ENCODE measurements at regions of chr1 and their contacts with region 1.

Region 1: DNA sequence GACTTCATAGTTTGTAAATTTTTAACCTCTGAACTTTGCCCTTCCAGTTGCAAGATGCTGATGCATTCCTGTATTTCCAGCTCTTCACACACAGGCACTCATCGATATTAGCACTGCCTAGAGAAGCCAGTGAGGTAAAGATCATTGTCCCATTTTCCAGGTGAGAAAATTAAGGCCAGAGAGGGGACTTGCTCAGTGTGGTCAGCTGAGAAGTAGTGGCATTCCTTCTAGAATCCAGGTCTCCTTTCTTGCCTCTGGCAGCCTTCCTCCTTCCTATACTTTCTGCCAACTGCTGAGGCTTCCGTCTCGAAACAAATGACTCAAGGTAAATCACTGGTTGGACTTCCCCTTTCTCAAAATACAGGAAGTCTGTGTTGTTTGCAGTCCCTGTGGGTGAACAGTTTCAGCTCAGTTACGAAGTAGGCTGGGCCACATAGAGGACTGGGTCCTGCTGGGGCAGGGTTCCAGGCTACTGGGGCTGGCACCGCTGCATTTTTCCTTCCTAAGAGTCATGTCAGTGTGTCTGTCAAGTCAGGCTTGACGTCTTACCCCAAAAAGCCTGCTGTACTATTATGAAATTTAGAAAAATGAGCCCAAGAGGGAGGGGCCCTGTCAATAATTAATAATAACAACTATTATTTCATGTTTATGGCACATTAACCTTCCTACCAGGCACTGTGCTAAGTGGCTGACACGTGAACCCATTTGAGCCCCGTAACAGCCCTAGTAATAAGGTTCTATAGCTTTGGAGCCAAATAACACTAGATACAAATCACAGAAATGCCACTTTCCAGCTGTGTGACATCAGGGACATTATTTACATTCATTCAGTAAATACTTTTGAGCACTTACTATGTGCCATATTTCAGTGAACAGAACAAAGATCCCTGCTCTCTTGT is 16.6 kb upstream of the RNF19B start:
- DNase-seq: no peak
- H3K4me3 ChIP-seq: no peak overlapping the region
- H3K27ac ChIP-seq: no peak overlapping the region
- H3K4me1 ChIP-seq: no peaks in the 10 kb centered on the region
- H3K27me3 ChIP-seq: no peaks in the 10 kb centered on the region
- CTCF ChIP-seq: no peak
- EP300 ChIP-seq: no peak
- POLR2A ChIP-seq: no peak

Region 2: DNA sequence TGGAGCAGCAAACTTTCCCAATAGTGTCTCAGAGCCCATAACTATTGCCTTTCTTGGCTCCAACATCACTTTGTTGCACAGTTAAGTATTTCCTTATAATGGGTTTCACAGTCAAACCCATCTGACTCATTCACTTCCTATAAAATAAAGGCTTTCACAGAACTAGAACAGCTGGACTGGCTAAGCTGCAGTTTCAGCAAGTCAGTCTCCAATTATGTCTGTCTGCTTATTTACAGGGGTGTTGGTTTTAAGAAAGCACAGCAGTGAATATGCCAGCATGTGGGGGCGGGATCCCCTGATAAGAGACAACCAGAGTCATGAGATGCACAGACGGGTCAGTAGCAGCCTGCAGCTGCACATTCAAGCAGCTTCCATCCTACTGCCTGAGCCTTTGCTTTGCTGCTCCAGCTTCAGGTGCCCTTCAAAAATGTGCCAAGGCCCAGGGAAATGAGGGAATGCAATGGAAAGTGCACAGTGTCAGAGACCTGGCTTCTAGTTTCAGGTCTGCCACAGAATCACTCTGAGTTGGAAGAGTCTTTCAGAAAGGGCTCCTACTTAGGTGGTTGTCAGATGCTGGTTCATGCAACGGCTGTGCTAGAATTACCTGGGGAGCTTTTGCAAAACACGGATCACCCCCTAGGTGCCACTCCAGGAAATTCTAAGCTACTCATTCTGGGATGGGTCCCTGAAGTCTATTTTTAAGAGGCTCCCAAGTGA is 41.4 kb before region 1 on chr1:
- intact Hi-C with region 1: no loop called
- DNase-seq: peak in 4 of 5 donors; percentile 30 to 64 (median 52)
- H3K4me3 ChIP-seq: no peak overlapping the region
- H3K27ac ChIP-seq: no peak overlapping the region
- H3K4me1 ChIP-seq: peaks cover 4% of the 10 kb centered on the region
- H3K27me3 ChIP-seq: no peaks in the 10 kb centered on the region
- CTCF ChIP-seq: no peak
- EP300 ChIP-seq: no peak
- POLR2A ChIP-seq: no peak

Region 3: DNA sequence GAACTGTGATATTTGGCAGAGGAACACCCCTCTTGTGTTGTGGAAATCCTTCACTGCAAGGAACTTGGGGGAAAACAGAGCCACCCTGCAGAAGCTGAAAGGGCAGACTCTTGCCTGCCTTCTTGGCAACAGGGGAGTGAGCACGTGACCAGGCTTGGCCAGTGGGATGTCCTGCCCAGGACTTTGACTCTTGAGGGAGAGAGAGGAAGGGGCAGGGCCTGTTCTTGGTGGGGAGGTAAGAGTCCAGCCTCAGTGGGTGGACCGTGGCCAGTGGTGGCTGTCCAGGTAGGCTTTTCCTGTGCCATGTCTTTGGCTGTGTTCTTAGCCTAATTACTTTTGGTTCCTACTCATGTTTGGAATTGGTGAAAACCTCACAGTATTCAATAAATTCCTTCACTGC is 64.0 kb after region 1 on chr1:
- intact Hi-C with region 1: loop called in 1 of 4 experiments (anchors 10 kb)
- DNase-seq: no peak
- H3K4me3 ChIP-seq: no peak overlapping the region
- H3K27ac ChIP-seq: no peak overlapping the region
- H3K4me1 ChIP-seq: no peaks in the 10 kb centered on the region
- H3K27me3 ChIP-seq: no peaks in the 10 kb centered on the region
- CTCF ChIP-seq: no peak
- EP300 ChIP-seq: no peak
- POLR2A ChIP-seq: no peak

Region 4: GRCh38 chr1:33312413-33312749 is 331.1 kb after region 1 on chr1:
- intact Hi-C with region 1: no loop called
- DNase-seq: peak in 2 of 5 donors; percentile 14 to 28
- H3K4me3 ChIP-seq: no peak overlapping the region
- H3K27ac ChIP-seq: no peak overlapping the region
- H3K4me1 ChIP-seq: no peaks in the 10 kb centered on the region
- H3K27me3 ChIP-seq: no peaks in the 10 kb centered on the region
- CTCF ChIP-seq: no peak
- EP300 ChIP-seq: no peak
- POLR2A ChIP-seq: no peak

Region 5: GRCh38 chr1:34306568-34306967 is 1325.3 kb after region 1 on chr1:
- intact Hi-C with region 1: no loop called
- DNase-seq: no peak
- H3K4me3 ChIP-seq: no peak overlapping the region
- H3K27ac ChIP-seq: no peak overlapping the region
- H3K4me1 ChIP-seq: no peaks in the 10 kb centered on the region
- H3K27me3 ChIP-seq: no peaks in the 10 kb centered on the region
- CTCF ChIP-seq: no peak
- EP300 ChIP-seq: no peak
- POLR2A ChIP-seq: no peak